GM23248 (cell line): ENCODE measurements at regions of chr7 and their contacts with region 1.

Region 1: DNA sequence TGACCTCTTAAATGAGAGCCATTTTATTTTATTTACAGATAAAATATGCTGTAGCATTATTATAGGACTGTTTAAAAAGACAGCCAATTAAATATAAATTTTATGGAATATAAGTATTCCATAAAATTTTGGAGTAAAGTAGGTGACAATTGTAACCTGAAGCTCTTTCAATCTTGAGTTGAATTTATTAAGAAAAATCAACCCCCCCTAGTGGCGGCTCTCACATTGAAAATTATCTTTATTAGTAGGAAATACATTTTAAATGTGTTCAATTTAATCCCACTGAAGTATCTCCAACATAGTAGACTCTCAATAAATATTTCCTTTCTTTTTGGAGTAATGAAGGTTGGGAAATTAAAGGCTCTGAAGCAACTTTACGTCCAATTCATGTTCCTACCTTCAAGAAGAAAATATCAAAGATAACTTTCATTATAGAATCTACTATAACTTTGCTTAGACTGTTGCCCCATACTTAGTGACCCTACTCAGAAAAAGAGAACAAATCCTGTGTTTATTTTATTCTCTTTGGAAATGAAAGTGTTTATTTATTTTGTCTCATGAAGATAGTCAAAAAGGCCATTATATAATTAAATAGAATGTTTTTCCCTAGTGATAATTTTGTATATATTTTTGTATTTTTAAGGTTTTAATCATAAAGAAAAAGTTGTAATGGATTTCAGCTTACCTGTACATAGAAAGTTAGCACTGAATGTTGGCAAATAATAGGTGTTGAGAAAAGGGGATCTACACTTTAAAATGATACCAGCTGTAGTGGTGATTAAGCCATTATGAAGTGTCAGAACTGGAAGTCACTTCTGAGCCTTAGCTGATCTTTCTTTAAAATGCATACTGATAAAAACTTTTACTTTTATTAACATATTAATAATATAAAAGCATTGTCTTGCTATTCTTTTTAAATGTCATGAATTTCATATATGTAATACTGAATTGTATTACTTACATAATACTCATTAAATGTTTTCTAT is 3.3 kb downstream of the AHR start:
- DNase-seq: peak; percentile 73
- H3K4me3 ChIP-seq: peak overlapping the region; percentile 86
- H3K27ac ChIP-seq: peak overlapping the region; percentile 62
- H3K4me1 ChIP-seq: peaks cover 61% of the 10 kb centered on the region
- H3K27me3 ChIP-seq: no peaks in the 10 kb centered on the region

Region 2: DNA sequence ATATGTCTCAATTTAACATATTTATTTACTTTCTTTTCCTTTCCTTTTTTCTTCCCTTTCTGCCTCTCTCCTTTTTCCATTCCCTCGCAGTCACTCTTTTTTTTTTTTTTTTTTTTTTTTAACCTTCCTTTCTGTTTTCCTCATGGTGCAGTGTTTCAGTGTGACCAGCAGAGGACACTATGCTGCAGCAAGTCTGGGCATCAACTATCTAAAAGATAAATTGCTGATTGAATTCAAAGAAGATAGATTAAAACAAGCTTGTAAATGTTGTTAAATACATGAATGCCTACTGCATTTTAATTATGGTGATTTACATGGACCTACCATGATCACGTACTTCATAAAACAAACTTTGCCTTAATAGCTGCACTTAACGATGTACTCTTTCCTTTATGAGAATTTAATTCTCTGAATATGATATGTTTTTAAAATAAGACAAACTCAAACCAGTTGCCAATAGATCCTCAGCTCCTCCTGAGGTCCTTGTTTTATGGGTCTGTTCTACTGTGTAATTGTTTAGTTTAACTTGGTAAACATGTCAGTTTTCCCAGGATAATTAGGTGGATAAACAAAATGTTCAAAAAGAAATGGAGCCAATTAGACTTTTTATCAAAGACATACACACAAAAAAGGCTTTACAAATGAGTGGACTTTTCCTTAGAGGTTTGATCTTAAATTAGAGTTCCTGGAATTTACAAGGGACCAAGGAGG is 319.0 kb before region 1 on chr7:
- in situ Hi-C with region 1: loop called (anchors 10 kb)
- DNase-seq: peak; percentile 72
- H3K4me3 ChIP-seq: no peak overlapping the region
- H3K27ac ChIP-seq: no peak overlapping the region
- H3K4me1 ChIP-seq: peaks cover 23% of the 10 kb centered on the region
- H3K27me3 ChIP-seq: no peaks in the 10 kb centered on the region

Region 3: DNA sequence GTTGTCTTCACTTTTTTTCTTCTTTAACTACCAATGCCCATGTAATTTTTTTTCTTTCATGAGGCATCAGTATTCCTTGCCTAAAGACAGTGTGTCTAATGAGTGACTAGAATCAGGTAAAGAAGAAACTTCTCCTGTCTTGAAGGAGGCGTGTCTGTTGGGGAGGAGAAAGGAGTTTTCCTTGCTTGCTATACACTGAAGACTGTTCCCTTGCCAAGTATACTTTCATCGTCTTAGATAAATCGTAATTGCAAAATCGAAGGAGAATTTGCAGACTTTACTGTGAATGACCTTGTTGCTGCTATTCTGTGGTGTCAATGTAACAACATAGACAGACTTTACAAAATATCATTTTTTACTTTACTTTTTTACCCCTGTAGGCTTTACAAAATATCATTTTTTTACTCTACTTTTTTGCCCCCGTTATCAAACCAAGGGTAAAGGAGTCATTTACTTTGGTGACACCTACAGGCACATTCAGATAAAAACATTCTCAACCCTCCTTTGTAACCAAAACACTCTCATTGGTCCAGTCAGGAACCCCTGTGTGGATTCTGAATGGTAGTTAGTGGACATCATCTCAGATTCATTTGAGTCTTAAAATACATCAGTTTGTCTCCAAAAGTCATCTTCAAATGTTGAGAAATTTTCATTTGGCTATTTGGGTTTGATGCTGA is 229.1 kb after region 1 on chr7:
- in situ Hi-C with region 1: loop called (anchors 10 kb)
- DNase-seq: no peak
- H3K4me3 ChIP-seq: no peak overlapping the region
- H3K27ac ChIP-seq: peak overlapping the region; percentile 52; the same call in 1 of the 2 replicates
- H3K4me1 ChIP-seq: peaks cover 58% of the 10 kb centered on the region
- H3K27me3 ChIP-seq: no peaks in the 10 kb centered on the region

Region 4: DNA sequence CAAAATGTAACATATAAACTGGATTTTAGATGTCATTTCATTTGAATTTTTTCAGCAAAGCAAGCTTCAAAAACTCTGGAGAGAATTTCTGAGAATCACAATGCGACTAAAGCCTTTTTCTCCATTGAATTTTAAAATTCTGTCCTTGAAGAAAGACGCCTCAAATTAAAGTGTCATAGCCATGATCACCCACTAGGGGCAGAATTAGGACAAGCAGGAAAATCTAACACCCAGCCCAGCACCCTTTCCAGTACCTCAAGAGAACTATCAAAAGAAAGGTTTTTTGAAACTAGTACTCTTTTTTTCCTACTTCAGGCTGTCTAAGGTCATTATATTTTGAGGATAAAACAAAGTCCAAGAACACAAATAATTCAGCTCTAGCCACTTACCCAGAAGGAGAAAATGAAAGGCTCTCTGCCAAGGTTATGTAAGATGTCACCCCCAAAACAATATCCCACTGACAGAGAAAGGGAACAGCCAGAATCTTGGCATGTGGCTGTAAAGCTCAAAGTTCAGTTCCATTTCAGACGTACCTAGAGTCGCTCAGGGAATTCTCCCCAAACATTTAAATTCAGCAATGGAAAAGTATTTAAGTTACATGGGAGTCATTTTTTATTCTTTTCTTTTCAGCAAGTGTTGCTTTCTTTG is 339.1 kb after region 1 on chr7:
- in situ Hi-C with region 1: loop called (anchors 10 kb)
- DNase-seq: peak; percentile 52
- H3K4me3 ChIP-seq: no peak overlapping the region
- H3K27ac ChIP-seq: no peak overlapping the region
- H3K4me1 ChIP-seq: no peaks in the 10 kb centered on the region
- H3K27me3 ChIP-seq: no peaks in the 10 kb centered on the region